GM10248 (cell line): ENCODE measurements at regions of chr1 and their contacts with region 1.

Region 1: GRCh38 chr1:72037745-72038343 is 244.5 kb downstream of the NEGR1 start:
- DNase-seq: peak; percentile 10
- CTCF ChIP-seq: peak; percentile 57

Region 2: DNA sequence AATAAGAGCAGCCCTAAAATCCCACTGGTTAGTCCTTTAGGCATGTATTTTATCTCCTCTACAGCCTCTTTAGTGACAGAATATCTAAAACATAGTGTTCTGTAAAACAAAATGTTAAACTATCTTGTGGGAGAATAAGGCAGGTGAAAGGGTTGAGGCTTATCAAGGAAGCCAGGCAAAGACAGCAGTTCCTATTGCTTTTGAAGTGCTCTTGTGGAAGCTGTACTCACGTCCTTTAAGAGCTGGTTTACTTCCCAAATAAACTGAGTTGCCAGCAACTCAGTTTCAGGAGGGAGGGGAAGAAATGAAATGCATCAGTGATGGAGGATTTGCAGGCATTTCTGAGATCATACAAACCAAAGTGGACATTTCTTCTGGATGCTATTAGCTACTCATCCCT is 427.4 kb before region 1 on chr1:
- CTCF ChIA-PET with region 1: no interaction called
- POLR2A ChIA-PET with region 1: no interaction called
- DNase-seq: no peak
- CTCF ChIP-seq: no peak

Region 3: DNA sequence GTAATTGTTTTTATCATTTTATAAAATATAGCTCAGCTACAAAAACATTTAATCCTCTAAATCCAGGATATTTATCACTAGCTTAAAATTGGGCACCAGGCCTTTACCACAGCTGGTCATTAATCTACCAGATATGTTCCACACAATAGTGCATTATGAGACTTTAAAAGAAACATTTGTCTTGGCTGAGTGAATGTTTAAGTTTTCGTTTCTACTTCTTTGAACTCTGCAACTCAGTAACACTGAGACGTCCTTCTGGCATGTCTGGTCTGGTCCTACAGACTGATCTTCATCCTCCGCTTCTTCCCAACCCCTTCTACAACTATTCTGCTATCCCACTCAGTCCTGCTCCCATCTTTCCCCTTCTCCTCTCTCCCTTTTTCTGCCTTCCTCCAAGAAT is 51.7 kb before region 1 on chr1:
- CTCF ChIA-PET with region 1: no interaction called
- POLR2A ChIA-PET with region 1: no interaction called
- DNase-seq: no peak
- CTCF ChIP-seq: no peak

Region 4: GRCh38 chr1:72023063-72023930 is 14.5 kb before region 1 on chr1:
- CTCF ChIA-PET with region 1: interaction called, 13 read pairs
- POLR2A ChIA-PET with region 1: no interaction called
- DNase-seq: no peak
- CTCF ChIP-seq: no peak

Region 5: GRCh38 chr1:72051538-72051937 is 13.7 kb after region 1 on chr1:
- CTCF ChIA-PET with region 1: interaction called, 11 read pairs
- POLR2A ChIA-PET with region 1: no interaction called
- DNase-seq: no peak
- CTCF ChIP-seq: no peak

Region 6: GRCh38 chr1:72271555-72272085 is 233.8 kb after region 1 on chr1:
- CTCF ChIA-PET with region 1: no interaction called
- POLR2A ChIA-PET with region 1: no interaction called
- DNase-seq: no peak
- CTCF ChIP-seq: no peak